ENCODE measurements at regions of chr6 and their contacts with region 1.

Region 1: GRCh38 chr6:158697811-158698210 is 48.0 kb downstream of the SYTL3 start:
- DNase-seq: no peak
- H3K4me3 ChIP-seq: no peak overlapping the region
- H3K4me3 Mint-ChIP-seq: no peak overlapping the region
- H3K27ac ChIP-seq: no peak overlapping the region
- H3K27ac Mint-ChIP-seq: no peak overlapping the region
- H3K4me1 ChIP-seq: no peaks in the 10 kb centered on the region
- H3K4me1 Mint-ChIP-seq: no peaks in the 10 kb centered on the region
- H3K27me3 ChIP-seq: no peaks in the 10 kb centered on the region
- H3K27me3 Mint-ChIP-seq: peaks cover 0 to 1% (median 0%) of the 10 kb centered on the region in 3 donors
- CTCF ChIP-seq: no peak

Region 2: GRCh38 chr6:158220786-158221442 is 476.9 kb before region 1 on chr6:
- intact Hi-C with region 1: loop called in 1 of 2 experiments (anchors 10 kb)
- DNase-seq: peak; percentile 83 to 87 (median 87)
- H3K4me3 ChIP-seq: no peak overlapping the region
- H3K4me3 Mint-ChIP-seq: no peak overlapping the region
- H3K27ac ChIP-seq: no peak overlapping the region
- H3K27ac Mint-ChIP-seq: peak overlapping the region in 6 of 7 donors; percentile 15 to 82 (median 65)
- H3K4me1 ChIP-seq: peaks cover 20 to 26% of the 10 kb centered on the region in 2 donors
- H3K4me1 Mint-ChIP-seq: peaks cover 15% of the 10 kb centered on the region
- H3K27me3 ChIP-seq: no peaks in the 10 kb centered on the region
- H3K27me3 Mint-ChIP-seq: peaks cover 6 to 12% (median 7%) of the 10 kb centered on the region in 3 donors
- CTCF ChIP-seq: peak; percentile 93

Region 3: DNA sequence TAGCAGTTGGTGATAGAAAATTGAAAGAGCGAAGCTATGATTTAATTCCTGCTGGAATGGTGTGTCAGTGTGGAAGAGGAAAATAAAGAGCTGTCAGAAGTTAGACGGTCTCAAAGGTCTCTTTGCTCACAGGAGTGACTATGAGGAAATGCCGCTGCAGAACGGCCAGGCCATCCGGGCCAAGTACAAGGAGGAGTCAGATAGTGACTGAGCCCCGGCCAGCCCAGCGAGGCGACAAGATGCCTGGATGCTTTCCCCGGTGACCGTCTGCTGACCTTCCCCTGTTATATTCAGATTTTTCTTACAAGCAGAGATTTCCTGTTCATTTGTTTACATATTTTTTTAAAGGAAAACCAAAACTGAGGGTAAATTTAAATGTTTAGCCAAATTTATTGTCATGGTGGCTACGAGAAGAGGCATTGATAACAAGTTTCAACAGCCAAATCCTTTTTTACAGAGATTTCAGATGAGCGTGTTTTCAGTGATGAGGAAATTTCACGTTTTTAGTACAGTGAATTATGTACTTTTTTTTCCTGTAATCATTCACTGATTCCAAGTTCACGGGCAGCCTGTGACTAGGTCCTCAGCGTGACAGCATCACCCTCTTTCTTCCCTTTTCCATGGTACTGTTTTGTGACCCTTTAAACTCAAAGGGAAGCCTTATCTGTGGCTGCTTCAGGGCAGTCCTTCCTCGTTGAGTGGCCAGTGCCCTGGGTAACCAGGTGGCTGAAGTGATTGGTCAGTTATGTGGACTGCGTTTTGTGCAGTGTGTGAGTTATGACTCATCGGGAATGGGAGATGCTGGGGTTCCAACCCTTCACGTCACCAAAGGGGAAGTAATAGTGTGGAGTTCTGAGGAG is 65.9 kb before region 1 on chr6:
- intact Hi-C with region 1: loop called in 1 of 2 experiments (anchors 5 kb)
- DNase-seq: peak; percentile 70 to 94 (median 78)
- H3K4me3 ChIP-seq: no peak overlapping the region
- H3K4me3 Mint-ChIP-seq: no peak overlapping the region
- H3K27ac ChIP-seq: peak overlapping the region in 1 of 2 donors; percentile 67
- H3K27ac Mint-ChIP-seq: peak overlapping the region; percentile 66 to 83 (median 80)
- H3K4me1 ChIP-seq: peaks cover 3 to 12% of the 10 kb centered on the region in 2 donors
- H3K4me1 Mint-ChIP-seq: peaks cover 13% of the 10 kb centered on the region
- H3K27me3 ChIP-seq: no peaks in the 10 kb centered on the region
- H3K27me3 Mint-ChIP-seq: peaks cover 0 to 2% (median 2%) of the 10 kb centered on the region in 3 donors
- CTCF ChIP-seq: no peak

Region 4: GRCh38 chr6:158644231-158645063 is 53.4 kb before region 1 on chr6 and contains the start of gene DYNLT1:
- intact Hi-C with region 1: loop called in 1 of 2 experiments (anchors 10 kb)
- DNase-seq: peak; percentile 83 to 90 (median 84)
- H3K4me3 ChIP-seq: peak within 1 kb of the TSS; percentile 61 to 97 (median 78)
- H3K4me3 Mint-ChIP-seq: peak within 1 kb of the TSS; percentile 95 to 98
- H3K27ac ChIP-seq: peak within 1 kb of the TSS; percentile 82 to 95
- H3K27ac Mint-ChIP-seq: peak within 1 kb of the TSS; percentile 94 to 98 (median 96)
- H3K4me1 ChIP-seq: peaks cover 31 to 52% of the 10 kb centered on the region in 2 donors
- H3K4me1 Mint-ChIP-seq: peaks cover 50% of the 10 kb centered on the region
- H3K27me3 ChIP-seq: no peaks in the 10 kb centered on the region
- H3K27me3 Mint-ChIP-seq: no peaks in the 10 kb centered on the region
- CTCF ChIP-seq: no peak
- polyA plus RNA-seq, gene DYNLT1: 248 to 287 (median 286) TPM

Region 5: GRCh38 chr6:158752613-158753012 is 54.8 kb after region 1 on chr6:
- intact Hi-C with region 1: no loop called
- DNase-seq: no peak
- H3K4me3 ChIP-seq: no peak overlapping the region
- H3K4me3 Mint-ChIP-seq: no peak overlapping the region
- H3K27ac ChIP-seq: no peak overlapping the region
- H3K27ac Mint-ChIP-seq: no peak overlapping the region
- H3K4me1 ChIP-seq: no peaks in the 10 kb centered on the region
- H3K4me1 Mint-ChIP-seq: no peaks in the 10 kb centered on the region
- H3K27me3 ChIP-seq: no peaks in the 10 kb centered on the region
- H3K27me3 Mint-ChIP-seq: peaks cover 0 to 3% (median 3%) of the 10 kb centered on the region in 3 donors
- CTCF ChIP-seq: no peak

Region 6: GRCh38 chr6:158942349-158942748 is 244.5 kb after region 1 on chr6:
- intact Hi-C with region 1: no loop called
- DNase-seq: no peak
- H3K4me3 ChIP-seq: no peak overlapping the region
- H3K4me3 Mint-ChIP-seq: no peak overlapping the region
- H3K27ac ChIP-seq: no peak overlapping the region
- H3K27ac Mint-ChIP-seq: no peak overlapping the region
- H3K4me1 ChIP-seq: peaks cover 11 to 12% of the 10 kb centered on the region in 2 donors
- H3K4me1 Mint-ChIP-seq: peaks cover 19% of the 10 kb centered on the region
- H3K27me3 ChIP-seq: peaks cover 0 to 4% of the 10 kb centered on the region in 2 donors
- H3K27me3 Mint-ChIP-seq: peaks cover 6 to 24% (median 8%) of the 10 kb centered on the region in 3 donors
- CTCF ChIP-seq: no peak